Common myeloid progenitor, CD34-positive (primary cell): ENCODE measurements at regions of chr17 and their contacts with region 1.

Region 1: DNA sequence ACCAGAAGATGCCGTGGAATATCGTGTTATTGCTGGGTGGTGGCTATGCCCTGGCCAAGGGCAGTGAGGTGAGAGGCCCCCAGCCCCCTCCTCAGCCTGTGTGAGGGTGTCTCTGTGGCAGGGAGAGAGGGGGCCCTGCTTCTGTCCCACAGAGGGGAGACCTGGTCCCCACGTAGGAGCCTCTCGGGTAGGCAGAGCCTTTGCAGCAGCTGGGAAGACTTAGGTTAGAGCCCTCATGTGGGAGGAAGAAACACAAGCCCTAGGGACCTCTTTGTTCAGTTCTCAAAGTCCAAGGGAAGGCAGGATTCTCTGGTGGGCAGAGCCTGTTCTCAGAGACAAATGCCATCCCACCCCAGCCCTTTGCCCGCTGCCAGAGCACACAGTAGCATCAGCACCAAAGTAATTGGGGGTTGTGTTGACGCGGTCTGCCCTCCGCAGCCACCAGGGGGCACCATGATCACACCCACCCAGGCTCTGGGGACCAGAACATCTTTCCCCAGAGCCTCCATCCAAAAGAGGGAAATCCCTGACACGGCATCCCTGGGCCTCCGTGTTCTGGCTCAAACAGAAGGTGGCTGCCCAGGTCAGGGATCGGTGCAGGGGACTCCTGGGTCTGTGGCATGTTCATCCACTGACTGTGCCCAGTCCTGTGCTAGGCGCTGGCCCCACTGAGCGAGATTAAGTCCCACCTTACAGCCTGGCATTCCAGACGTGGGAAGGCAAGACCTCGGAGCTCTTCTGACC is 11.5 kb upstream of the FOXN1 start:
- DNase-seq: peak; percentile 63 to 83 (median 75)
- H3K4me3 ChIP-seq: no peak overlapping the region
- H3K27ac ChIP-seq: no peak overlapping the region
- H3K4me1 ChIP-seq: peaks cover 0 to 6% (median 2%) of the 10 kb centered on the region in 4 experiments
- H3K27me3 ChIP-seq: no peaks in the 10 kb centered on the region

Region 2: DNA sequence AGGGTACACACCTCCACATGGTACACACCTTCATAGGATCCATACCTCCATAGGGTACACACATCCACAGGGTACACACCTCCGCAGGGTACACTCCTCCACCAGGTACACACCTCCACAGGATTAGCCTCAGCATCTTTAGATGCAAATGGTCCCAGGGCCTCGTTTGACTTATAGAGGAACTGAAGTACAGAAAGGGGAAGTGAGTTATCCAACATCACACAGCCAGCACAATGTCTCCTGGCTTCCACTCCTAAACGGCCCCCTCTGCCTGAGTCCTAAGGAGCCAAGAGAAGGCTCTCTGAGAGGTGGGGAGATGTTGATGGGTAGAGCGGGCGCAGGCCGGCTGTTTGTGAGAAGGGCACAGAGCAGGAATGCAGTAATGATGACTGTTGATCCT is 23.5 kb after region 1 on chr17:
- CTCF ChIA-PET with region 1: interaction called, 10 read pairs
- POLR2A ChIA-PET with region 1: no interaction called
- DNase-seq: peak; percentile 29 to 88 (median 83)
- H3K4me3 ChIP-seq: no peak overlapping the region
- H3K27ac ChIP-seq: no peak overlapping the region
- H3K4me1 ChIP-seq: peaks cover 0 to 26% (median 22%) of the 10 kb centered on the region in 4 experiments
- H3K27me3 ChIP-seq: no peaks in the 10 kb centered on the region

Region 3: DNA sequence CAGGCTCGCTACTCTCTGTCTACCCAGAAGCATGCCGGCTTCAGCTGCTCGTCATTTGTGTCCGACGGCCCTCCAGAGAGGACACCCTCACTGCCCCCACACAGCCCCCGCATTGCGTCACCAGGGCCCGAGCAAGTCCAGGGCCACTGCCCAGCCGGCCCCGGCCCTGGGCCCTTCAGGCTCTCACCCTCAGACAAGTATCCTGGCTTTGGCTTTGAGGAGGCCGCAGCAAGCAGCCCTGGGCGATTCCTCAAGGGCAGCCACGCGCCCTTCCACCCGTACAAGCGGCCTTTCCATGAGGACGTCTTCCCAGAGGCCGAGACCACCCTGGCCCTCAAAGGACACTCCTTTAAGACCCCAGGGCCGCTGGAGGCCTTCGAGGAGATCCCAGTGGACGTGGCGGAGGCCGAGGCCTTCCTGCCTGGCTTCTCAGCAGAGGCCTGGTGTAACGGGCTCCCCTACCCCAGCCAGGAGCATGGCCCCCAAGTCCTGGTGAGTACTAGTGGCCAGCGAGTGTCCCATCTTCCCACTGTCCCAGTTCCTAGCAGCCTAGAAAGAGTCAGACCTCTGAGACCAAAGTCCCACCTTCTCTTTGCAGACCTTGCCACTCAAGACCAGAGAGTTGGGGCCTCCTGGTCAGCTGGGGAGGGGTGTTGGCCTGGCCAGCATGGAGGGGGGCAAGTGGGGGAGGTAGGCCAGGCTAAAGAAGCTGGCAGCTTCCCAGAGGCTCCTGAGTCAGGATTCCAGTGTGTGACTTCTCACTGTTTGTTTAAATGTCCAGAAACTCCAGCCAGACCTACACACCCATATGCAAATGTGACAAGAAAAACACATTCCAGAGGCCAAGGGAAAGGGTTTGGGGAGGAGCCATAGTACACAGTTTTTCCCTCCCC is 30.1 kb after region 1 on chr17:
- CTCF ChIA-PET with region 1: interaction called, 260 read pairs
- POLR2A ChIA-PET with region 1: no interaction called
- DNase-seq: no peak
- H3K4me3 ChIP-seq: no peak overlapping the region
- H3K27ac ChIP-seq: no peak overlapping the region
- H3K4me1 ChIP-seq: peaks cover 0 to 10% (median 6%) of the 10 kb centered on the region in 4 experiments
- H3K27me3 ChIP-seq: no peaks in the 10 kb centered on the region

Region 4: GRCh38 chr17:28547623-28548416 is 53.2 kb after region 1 on chr17:
- CTCF ChIA-PET with region 1: interaction called, 260 read pairs
- POLR2A ChIA-PET with region 1: no interaction called
- DNase-seq: peak; percentile 63 to 89 (median 82)
- H3K4me3 ChIP-seq: peak overlapping the region in 1 of 7 experiments; percentile 1
- H3K27ac ChIP-seq: peak overlapping the region in 1 of 2 experiments; percentile 45
- H3K4me1 ChIP-seq: peaks cover 2 to 34% (median 25%) of the 10 kb centered on the region in 4 experiments
- H3K27me3 ChIP-seq: no peaks in the 10 kb centered on the region

Region 5: DNA sequence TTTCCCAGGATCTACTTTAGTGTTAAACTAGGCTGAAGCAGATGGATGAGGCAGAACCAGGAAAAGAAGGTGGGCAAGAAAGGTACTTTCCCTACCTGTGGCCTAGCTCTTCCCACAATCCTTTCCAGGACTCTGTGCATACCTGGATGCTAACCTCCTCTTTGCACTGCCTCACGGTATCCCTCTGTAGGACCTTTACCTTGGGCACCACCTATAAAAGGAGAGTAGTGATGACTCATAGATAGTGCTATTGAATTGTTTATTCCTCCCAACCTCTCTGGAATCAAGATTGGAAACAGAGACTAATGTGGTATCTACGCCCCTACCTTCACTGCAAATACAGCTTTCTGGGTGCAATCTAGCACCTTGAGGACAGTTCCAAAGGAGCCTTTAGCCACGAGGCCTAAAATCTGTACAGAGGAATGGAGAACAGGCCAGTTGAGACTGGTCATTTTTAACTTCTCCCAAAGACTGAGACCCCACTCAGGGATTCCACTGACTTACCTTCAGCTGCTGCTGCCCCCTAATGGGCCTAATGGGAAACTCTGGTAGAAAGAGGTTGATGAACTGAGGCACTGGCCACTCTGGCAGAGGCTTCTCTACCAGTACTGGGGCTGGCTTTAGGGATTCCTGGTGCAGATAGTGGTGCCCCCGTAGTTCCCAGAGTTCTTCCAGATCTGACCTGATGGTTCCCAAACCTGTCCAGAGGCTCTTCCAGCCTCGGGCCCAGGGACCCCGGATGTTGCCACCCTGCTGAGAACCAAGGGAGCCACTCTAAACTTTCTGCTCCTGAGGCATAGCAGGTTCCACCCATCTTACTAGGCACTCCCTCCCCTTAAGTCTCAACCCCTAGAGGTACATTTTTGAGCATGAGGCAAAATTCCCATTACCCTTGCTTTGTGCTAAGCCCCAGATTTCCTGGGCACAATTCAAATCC is 118.6 kb after region 1 on chr17:
- CTCF ChIA-PET with region 1: interaction called, 10 read pairs
- POLR2A ChIA-PET with region 1: interaction called, 3 read pairs
- DNase-seq: peak; percentile 15 to 48 (median 31)
- H3K4me3 ChIP-seq: peak overlapping the region in 1 of 7 experiments; percentile 31
- H3K27ac ChIP-seq: no peak overlapping the region
- H3K4me1 ChIP-seq: peaks cover 11 to 30% (median 26%) of the 10 kb centered on the region in 4 experiments
- H3K27me3 ChIP-seq: no peaks in the 10 kb centered on the region